ENCODE measurements at regions of chr19 and their contacts with region 1.

Region 1: DNA sequence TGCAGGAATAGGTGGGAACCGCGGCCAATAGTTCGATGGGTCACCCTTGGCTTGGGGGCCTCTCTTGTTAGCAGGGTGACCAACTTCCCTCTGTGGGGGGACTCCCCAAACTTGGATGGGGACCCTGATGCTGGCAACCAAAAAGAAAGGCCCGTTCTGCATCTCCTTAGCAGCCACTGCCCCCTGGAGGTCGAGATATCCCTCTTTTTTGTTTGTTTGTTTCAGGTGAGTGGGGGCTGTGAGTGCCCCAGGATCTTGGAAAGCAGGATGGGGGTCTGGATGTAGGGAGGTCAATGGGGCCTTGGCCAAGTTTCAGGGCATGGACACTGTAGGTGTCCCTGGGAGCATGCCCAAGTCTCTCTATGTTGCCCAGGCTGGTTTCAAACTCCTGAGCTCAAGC is 7.7 kb upstream of the CRTC1 start:
- DNase-seq: peak; percentile 44
- H3K4me3 Mint-ChIP-seq: no peak overlapping the region
- H3K27ac Mint-ChIP-seq: no peak overlapping the region
- H3K4me1 Mint-ChIP-seq: peaks cover 12% of the 10 kb centered on the region
- H3K27me3 Mint-ChIP-seq: no peaks in the 10 kb centered on the region
- CTCF ChIP-seq: peak; percentile 35

Region 2: DNA sequence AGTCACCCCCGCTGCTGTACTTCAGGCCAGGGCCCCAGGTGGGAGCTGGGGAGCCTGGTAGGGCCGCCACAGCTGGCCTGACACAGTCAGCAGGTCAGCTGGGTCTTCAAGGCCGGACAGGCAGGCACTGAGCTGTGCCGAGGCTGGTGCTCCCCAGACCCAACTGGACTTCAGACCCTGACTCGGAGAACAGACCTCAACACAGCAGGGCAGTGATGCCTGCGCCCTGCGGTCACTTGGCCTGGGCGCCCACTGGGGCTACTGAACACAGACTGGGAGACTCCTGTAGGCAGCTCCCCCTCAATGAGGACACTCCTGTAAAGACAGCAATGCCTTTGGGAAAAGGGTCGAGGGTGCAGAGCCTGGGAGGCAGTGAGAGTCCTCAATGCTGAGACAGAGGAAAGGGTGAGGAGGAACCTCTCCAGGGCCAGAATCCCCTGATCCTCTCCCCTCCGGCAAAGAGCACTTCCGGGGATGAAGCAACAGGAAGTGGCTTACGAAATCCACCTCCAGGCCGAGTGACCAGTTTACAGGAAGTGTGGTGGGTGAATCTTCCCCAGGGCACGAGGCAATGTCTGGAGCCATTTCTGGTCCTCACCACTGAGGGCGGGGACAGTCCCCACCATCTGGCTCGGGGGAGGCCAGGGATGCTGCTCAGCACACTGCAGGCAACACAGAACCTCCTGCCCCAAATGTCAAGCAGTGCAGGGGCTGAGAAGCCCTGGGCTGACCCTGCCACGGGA is 197.0 kb before region 1 on chr19:
- CTCF ChIA-PET with region 1: no interaction called
- POLR2A ChIA-PET with region 1: no interaction called
- intact Hi-C with region 1: loop called (anchors 10 kb)
- DNase-seq: peak; percentile 94
- H3K4me3 Mint-ChIP-seq: peak overlapping the region; percentile 50
- H3K27ac Mint-ChIP-seq: peak overlapping the region; percentile 84
- H3K4me1 Mint-ChIP-seq: peaks cover 36% of the 10 kb centered on the region
- H3K27me3 Mint-ChIP-seq: no peaks in the 10 kb centered on the region
- CTCF ChIP-seq: no peak

Region 3: DNA sequence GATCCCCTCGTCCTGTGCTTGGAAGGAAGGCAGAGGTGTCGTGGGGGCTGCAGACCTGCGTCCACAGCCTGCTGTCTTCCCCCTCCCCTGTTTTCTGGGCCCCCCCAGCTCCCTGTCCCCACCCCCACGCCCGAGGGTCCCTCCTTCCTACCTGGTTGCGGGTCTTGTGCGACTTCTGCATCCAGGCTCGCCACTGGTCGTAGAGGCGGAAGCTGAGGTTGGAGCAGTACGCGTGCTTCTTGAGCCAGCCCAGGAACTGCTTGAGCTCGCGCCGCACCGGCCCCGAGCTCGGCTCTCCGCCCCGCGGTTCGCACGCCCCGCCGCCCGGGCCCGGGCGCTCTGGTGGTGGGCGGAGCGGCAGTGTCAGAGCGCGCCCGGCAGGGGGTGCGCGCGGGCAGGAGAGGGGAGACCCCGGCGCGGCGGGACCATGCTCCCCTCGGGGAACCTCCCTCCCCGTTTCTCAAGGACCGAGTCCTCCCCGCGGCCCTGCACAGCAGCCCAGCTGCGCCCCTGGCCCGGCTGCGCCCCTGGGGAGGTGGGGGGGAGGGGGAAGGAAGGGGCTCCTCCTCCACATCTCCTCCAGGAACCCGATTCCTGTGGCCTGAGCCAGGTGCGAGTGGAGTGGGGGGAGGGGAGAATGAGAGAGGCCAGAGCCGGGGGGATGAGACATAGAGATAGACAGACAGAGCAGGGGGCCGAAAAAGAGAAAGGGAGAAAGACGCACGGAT is 81.5 kb before region 1 on chr19:
- CTCF ChIA-PET with region 1: interaction called, 18 read pairs
- POLR2A ChIA-PET with region 1: interaction called, 3 read pairs
- intact Hi-C with region 1: loop called (anchors 5 kb)
- DNase-seq: peak; percentile 73
- H3K4me3 Mint-ChIP-seq: no peak overlapping the region
- H3K27ac Mint-ChIP-seq: no peak overlapping the region
- H3K4me1 Mint-ChIP-seq: peaks cover 17% of the 10 kb centered on the region
- H3K27me3 Mint-ChIP-seq: no peaks in the 10 kb centered on the region
- CTCF ChIP-seq: peak; percentile 93

Region 4: GRCh38 chr19:18636183-18636968 is 39.4 kb before region 1 on chr19:
- CTCF ChIA-PET with region 1: no interaction called
- POLR2A ChIA-PET with region 1: no interaction called
- intact Hi-C with region 1: loop called (anchors 5 kb)
- DNase-seq: peak; percentile 97
- H3K4me3 Mint-ChIP-seq: peak overlapping the region; percentile 82
- H3K27ac Mint-ChIP-seq: peak overlapping the region; percentile 92
- H3K4me1 Mint-ChIP-seq: peaks cover 30% of the 10 kb centered on the region
- H3K27me3 Mint-ChIP-seq: no peaks in the 10 kb centered on the region
- CTCF ChIP-seq: no peak

Region 5: GRCh38 chr19:18657590-18658365 is 18.0 kb before region 1 on chr19:
- CTCF ChIA-PET with region 1: no interaction called
- POLR2A ChIA-PET with region 1: no interaction called
- intact Hi-C with region 1: no loop called
- DNase-seq: no peak
- H3K4me3 Mint-ChIP-seq: no peak overlapping the region
- H3K27ac Mint-ChIP-seq: no peak overlapping the region
- H3K4me1 Mint-ChIP-seq: peaks cover 7% of the 10 kb centered on the region
- H3K27me3 Mint-ChIP-seq: peaks cover 18% of the 10 kb centered on the region
- CTCF ChIP-seq: no peak

Measured in MCF 10A (cell line).